WTC11 (cell line): ENCODE measurements at regions of chr3 and their contacts with region 1.

Region 1: GRCh38 chr3:14203521-14204079 is 25.0 kb downstream of the LSM3 start:
- DNase-seq: peak; percentile 60
- ATAC-seq: peak; percentile 81
- H3K4me3 Mint-ChIP-seq: no peak overlapping the region
- H3K27ac Mint-ChIP-seq: peak overlapping the region; percentile 74; the same call in 1 of the 2 replicates
- H3K4me1 Mint-ChIP-seq: peaks cover 5% of the 10 kb centered on the region; the same call in 1 of the 2 replicates
- H3K27me3 Mint-ChIP-seq: no peaks in the 10 kb centered on the region
- CTCF ChIP-seq: peak; percentile 71; the same call in 1 of the 2 replicates

Region 2: GRCh38 chr3:14178247-14179113 is 25.1 kb before region 1 on chr3 and contains the starts of genes LSM3 and XPC:
- CTCF ChIA-PET with region 1: interaction called, 29 read pairs
- POLR2A ChIA-PET with region 1: no interaction called
- DNase-seq: peak; percentile 92
- ATAC-seq: peak; percentile 99
- H3K4me3 Mint-ChIP-seq: peak within 1 kb of the TSS; percentile 93
- H3K27ac Mint-ChIP-seq: peak within 1 kb of the TSS; percentile 99
- H3K4me1 Mint-ChIP-seq: peaks cover 29% of the 10 kb centered on the region
- H3K27me3 Mint-ChIP-seq: no peaks in the 10 kb centered on the region
- CTCF ChIP-seq: no peak
- total RNA-seq, gene LSM3: 17.7 to 21.4 TPM (median 17.8 TPM) in 3 replicates
- total RNA-seq, gene XPC: 31.7 to 34.9 TPM (median 32.6 TPM) in 3 replicates

Region 3: GRCh38 chr3:14243782-14244181 is 40.2 kb after region 1 on chr3:
- CTCF ChIA-PET with region 1: interaction called, 21 read pairs
- POLR2A ChIA-PET with region 1: no interaction called
- DNase-seq: no peak
- ATAC-seq: no peak
- H3K4me3 Mint-ChIP-seq: no peak overlapping the region
- H3K27ac Mint-ChIP-seq: no peak overlapping the region
- H3K4me1 Mint-ChIP-seq: no peaks in the 10 kb centered on the region
- H3K27me3 Mint-ChIP-seq: peaks cover 14% of the 10 kb centered on the region
- CTCF ChIP-seq: no peak

Region 4: DNA sequence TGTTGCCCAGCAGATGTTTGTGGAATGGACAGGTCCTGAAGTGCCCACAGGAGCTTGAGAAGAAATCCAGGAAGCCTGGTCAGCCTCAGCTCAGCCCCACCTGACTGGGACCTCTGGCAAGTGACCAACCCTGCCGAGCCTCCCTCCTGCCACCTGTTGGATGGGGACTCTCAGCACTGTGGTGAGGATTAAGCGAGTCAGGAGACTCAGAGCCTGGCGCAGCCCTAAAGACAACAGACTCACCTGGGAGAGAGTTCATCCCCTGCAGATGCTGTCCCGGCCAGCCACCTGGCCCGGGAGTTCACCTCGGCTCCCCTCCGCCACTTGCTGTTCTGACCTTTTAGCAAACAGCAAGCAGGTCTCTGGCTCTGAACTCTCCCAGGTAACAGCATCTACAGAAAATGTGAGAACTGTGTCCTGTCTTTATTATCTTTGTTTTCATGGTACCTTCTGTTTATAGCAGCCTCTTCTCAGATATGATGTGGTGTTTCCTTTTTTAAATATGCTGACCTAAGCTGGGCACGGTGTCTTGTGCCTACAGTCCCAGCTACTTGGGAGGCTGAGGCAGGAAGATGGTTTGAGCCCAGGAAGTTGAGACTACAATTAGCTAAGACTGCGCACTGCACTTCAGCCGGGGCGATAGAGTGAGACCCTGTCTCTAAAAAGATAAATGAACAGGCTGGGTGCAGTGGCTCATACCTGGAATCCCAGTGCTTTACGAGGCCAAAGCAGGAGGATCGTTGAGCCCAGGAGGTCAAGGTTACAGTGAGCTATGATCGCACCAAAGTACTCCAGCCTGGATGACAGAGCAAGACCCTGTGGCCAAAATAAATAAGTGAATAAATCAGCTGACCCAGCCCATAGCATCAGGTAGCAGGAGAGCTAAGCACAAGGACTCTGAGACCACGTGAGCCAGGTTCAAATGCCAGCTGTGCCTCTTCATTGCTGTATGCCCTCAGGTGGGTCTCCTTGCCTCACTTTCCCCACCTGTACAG is 166.4 kb after region 1 on chr3:
- CTCF ChIA-PET with region 1: interaction called, 18 read pairs
- POLR2A ChIA-PET with region 1: no interaction called
- DNase-seq: peak; percentile 70
- ATAC-seq: peak; percentile 95
- H3K4me3 Mint-ChIP-seq: no peak overlapping the region
- H3K27ac Mint-ChIP-seq: peak overlapping the region; percentile 19; the same call in 1 of the 2 replicates
- H3K4me1 Mint-ChIP-seq: peaks cover 51% of the 10 kb centered on the region
- H3K27me3 Mint-ChIP-seq: peaks cover 2% of the 10 kb centered on the region; the same call in 1 of the 2 replicates
- CTCF ChIP-seq: no peak

Region 5: GRCh38 chr3:14461748-14462324 is 258.2 kb after region 1 on chr3:
- CTCF ChIA-PET with region 1: interaction called, 67 read pairs
- POLR2A ChIA-PET with region 1: no interaction called
- DNase-seq: peak; percentile 58
- ATAC-seq: peak; percentile 49
- H3K4me3 Mint-ChIP-seq: no peak overlapping the region
- H3K27ac Mint-ChIP-seq: no peak overlapping the region
- H3K4me1 Mint-ChIP-seq: peaks cover 28% of the 10 kb centered on the region
- H3K27me3 Mint-ChIP-seq: no peaks in the 10 kb centered on the region; the same call in 1 of the 2 replicates
- CTCF ChIP-seq: no peak

Region 6: DNA sequence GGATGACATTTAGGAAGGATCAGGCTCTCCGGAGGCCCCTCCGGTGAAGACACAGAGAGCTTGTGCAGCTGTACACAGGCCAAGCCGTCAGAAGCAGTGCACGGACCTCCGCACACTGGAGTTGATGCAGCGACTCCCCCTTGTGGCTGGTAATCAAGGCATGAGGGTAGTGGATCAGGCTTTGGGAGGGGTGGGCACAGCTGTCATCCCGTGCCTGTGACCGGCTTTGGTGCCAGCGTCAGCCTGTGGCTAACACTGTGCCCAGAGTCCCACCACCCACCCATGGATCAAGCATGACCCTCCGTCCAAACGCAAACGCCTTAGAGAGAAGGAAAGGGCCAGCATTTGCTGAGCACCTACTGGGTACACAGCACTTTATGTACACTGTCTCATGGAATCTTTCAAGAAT is 344.7 kb after region 1 on chr3:
- CTCF ChIA-PET with region 1: interaction called, 18 read pairs
- POLR2A ChIA-PET with region 1: no interaction called
- DNase-seq: peak; percentile 73
- ATAC-seq: peak; percentile 91
- H3K4me3 Mint-ChIP-seq: no peak overlapping the region
- H3K27ac Mint-ChIP-seq: no peak overlapping the region
- H3K4me1 Mint-ChIP-seq: peaks cover 5% of the 10 kb centered on the region; the same call in 1 of the 2 replicates
- H3K27me3 Mint-ChIP-seq: no peaks in the 10 kb centered on the region; the same call in 1 of the 2 replicates
- CTCF ChIP-seq: peak; percentile 56; the same call in 1 of the 2 replicates